ENCODE measurements at regions of chr13 and their contacts with region 1.

Region 1: GRCh38 chr13:99617474-99618255 is 116.4 kb downstream of the TM9SF2 start:
- DNase-seq: no peak
- H3K4me3 ChIP-seq: no peak overlapping the region
- H3K27ac ChIP-seq: no peak overlapping the region
- H3K4me1 ChIP-seq: peaks cover 22% of the 10 kb centered on the region
- H3K27me3 ChIP-seq: no peaks in the 10 kb centered on the region
- CTCF ChIP-seq: peak; percentile 73 to 79

Region 2: GRCh38 chr13:99501184-99501847 is 116.3 kb before region 1 on chr13 and contains the start of gene TM9SF2:
- CTCF ChIA-PET with region 1: no interaction called
- dilution Hi-C with region 1: no loop called
- in situ Hi-C with region 1: no loop called
- intact Hi-C with region 1: loop called (anchors 5 kb)
- DNase-seq: peak; percentile 97
- H3K4me3 ChIP-seq: peak within 1 kb of the TSS; percentile 76 to 99 (median 79)
- H3K27ac ChIP-seq: peak within 1 kb of the TSS; percentile 84
- H3K4me1 ChIP-seq: peaks cover 29% of the 10 kb centered on the region
- H3K27me3 ChIP-seq: no peaks in the 10 kb centered on the region
- CTCF ChIP-seq: no peak
- total RNA-seq, gene TM9SF2: 87.8 to 143 TPM

Region 3: GRCh38 chr13:99577934-99578917 is 39.4 kb before region 1 on chr13:
- CTCF ChIA-PET with region 1: interaction called, 3 read pairs
- dilution Hi-C with region 1: no loop called
- in situ Hi-C with region 1: no loop called
- intact Hi-C with region 1: loop called (anchors 1 kb)
- DNase-seq: no peak
- H3K4me3 ChIP-seq: no peak overlapping the region
- H3K27ac ChIP-seq: no peak overlapping the region
- H3K4me1 ChIP-seq: no peaks in the 10 kb centered on the region
- H3K27me3 ChIP-seq: no peaks in the 10 kb centered on the region
- CTCF ChIP-seq: peak in 1 of 2 donors; percentile 35

Region 4: GRCh38 chr13:99606324-99607066 is 11.2 kb before region 1 on chr13:
- CTCF ChIA-PET with region 1: interaction called, 21 read pairs
- dilution Hi-C with region 1: no loop called
- in situ Hi-C with region 1: no loop called
- intact Hi-C with region 1: loop called (anchors 1 kb)
- DNase-seq: peak; percentile 75
- H3K4me3 ChIP-seq: peak within 1 kb of the TSS; percentile 75 to 97 (median 87)
- H3K27ac ChIP-seq: peak within 1 kb of the TSS; percentile 56
- H3K4me1 ChIP-seq: peaks cover 17% of the 10 kb centered on the region
- H3K27me3 ChIP-seq: no peaks in the 10 kb centered on the region
- CTCF ChIP-seq: no peak

Region 5: GRCh38 chr13:99663185-99663825 is 45.6 kb after region 1 on chr13:
- CTCF ChIA-PET with region 1: no interaction called
- dilution Hi-C with region 1: no loop called
- in situ Hi-C with region 1: no loop called
- intact Hi-C with region 1: no loop called
- DNase-seq: no peak
- H3K4me3 ChIP-seq: no peak overlapping the region
- H3K27ac ChIP-seq: no peak overlapping the region
- H3K4me1 ChIP-seq: peaks cover 2% of the 10 kb centered on the region
- H3K27me3 ChIP-seq: no peaks in the 10 kb centered on the region
- CTCF ChIP-seq: no peak

Region 6: DNA sequence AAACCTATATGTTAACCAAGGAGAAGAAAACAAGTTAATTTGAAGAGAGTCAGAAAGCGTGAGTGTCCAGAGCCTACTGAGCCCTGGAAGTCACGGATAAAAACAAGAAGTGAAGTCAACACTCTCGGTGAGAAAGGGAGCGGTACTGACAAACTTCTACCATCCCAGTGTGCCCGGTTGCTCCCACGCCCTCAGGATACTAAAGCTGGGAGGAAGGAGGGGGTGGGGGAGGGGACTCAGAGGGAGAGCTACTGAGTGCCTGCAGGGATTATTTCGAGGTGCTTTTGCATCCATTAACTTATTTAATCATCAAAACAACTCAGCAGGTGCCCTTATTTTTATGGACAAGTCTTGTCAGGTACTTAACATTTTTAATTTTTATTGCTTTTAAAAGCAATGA is 187.7 kb after region 1 on chr13:
- CTCF ChIA-PET with region 1: no interaction called
- dilution Hi-C with region 1: no loop called
- in situ Hi-C with region 1: no loop called
- intact Hi-C with region 1: no loop called
- DNase-seq: no peak
- H3K4me3 ChIP-seq: no peak overlapping the region
- H3K27ac ChIP-seq: no peak overlapping the region
- H3K4me1 ChIP-seq: no peaks in the 10 kb centered on the region
- H3K27me3 ChIP-seq: no peaks in the 10 kb centered on the region
- CTCF ChIP-seq: no peak

Measured in mammary epithelial cell (primary cell).